HepG2 (cell line): ENCODE measurements at regions of chr19 and their contacts with region 1.

Region 1: GRCh38 chr19:6753178-6754031 is 13.8 kb downstream of the SH2D3A start:
- DNase-seq: peak; percentile 89
- ATAC-seq: peak; percentile 91
- H3K4me3 ChIP-seq: peak overlapping the region; percentile 55 to 82 (median 75)
- H3K27ac ChIP-seq: peak overlapping the region; percentile 95
- H3K4me1 ChIP-seq: peaks cover 27% of the 10 kb centered on the region
- H3K27me3 ChIP-seq: no peaks in the 10 kb centered on the region
- CTCF ChIP-seq: peak; percentile 96
- EP300 ChIP-seq: no peak
- POLR2A ChIP-seq: peak in 1 of 2 experiments; percentile 37; a peak in 3 of 4 replicates
- RAD21 ChIP-seq: peak; percentile 94

Region 2: GRCh38 chr19:6639439-6639838 is 114.0 kb before region 1 on chr19:
- CTCF ChIA-PET with region 1: no interaction called
- POLR2A ChIA-PET with region 1: no interaction called
- in situ Hi-C with region 1: no loop called
- intact Hi-C with region 1: no loop called
- DNase-seq: no peak
- ATAC-seq: no peak
- H3K4me3 ChIP-seq: no peak overlapping the region
- H3K27ac ChIP-seq: no peak overlapping the region
- H3K4me1 ChIP-seq: no peaks in the 10 kb centered on the region
- H3K27me3 ChIP-seq: peaks cover 0 to 6% of the 10 kb centered on the region in 2 experiments; a peak in 2 of 5 replicates
- CTCF ChIP-seq: no peak
- EP300 ChIP-seq: no peak
- POLR2A ChIP-seq: no peak
- RAD21 ChIP-seq: no peak

Region 3: GRCh38 chr19:6705931-6706632 is 47.3 kb before region 1 on chr19:
- CTCF ChIA-PET with region 1: no interaction called
- POLR2A ChIA-PET with region 1: interaction called, 20 read pairs
- in situ Hi-C with region 1: no loop called
- intact Hi-C with region 1: no loop called
- DNase-seq: no peak
- ATAC-seq: peak; percentile 16
- H3K4me3 ChIP-seq: no peak overlapping the region
- H3K27ac ChIP-seq: no peak overlapping the region
- H3K4me1 ChIP-seq: 0 out of 2 replicates have a peak, but pooled peaks cover 10% of the 10 kb centered on the region
- H3K27me3 ChIP-seq: no peaks in the 10 kb centered on the region
- CTCF ChIP-seq: no peak
- EP300 ChIP-seq: no peak
- POLR2A ChIP-seq: peak in 1 of 2 experiments; percentile 46; a peak in 1 of 4 replicates
- RAD21 ChIP-seq: no peak

Region 4: DNA sequence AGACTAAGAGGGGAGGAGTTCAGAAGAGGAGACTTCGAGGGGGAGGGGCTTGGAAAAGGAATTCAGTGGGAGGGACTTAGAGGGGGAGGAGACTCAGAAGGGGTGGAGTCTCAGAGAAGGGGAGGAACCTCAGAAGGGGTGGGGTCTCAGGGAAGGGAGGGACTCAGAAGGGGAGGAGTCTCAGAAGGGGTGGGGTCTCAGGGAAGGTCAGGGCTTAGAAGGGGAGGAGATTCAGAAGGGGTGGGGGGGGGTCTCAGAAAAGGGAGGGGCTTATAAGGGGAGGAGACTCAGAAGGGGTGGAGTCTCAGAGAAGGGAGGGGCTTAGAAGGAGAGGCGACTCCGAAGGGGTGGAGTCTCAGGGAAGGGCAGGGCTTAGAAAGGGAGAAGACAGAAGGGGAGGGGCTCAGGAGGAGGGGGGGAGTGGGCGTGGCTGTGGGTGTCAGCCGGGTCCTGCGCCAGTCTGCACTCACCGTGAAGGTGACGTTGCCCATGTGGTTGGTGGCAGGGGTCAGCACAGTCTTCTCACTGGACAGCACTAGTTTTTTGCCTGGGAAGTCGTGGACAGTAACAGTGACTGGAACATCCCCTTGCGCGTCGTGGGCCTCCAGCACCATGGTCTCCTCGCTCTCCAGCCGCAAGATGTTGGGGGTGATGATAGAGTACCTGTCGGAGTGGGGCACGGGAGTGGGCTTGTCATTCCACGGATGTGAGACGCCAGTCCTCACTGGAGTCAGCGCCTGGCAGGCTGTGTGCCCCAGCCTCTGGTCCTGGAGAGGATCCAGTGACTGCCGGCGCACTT is 34.5 kb before region 1 on chr19:
- CTCF ChIA-PET with region 1: no interaction called
- POLR2A ChIA-PET with region 1: interaction called, 83 read pairs
- in situ Hi-C with region 1: no loop called
- intact Hi-C with region 1: loop called (anchors 1 kb)
- DNase-seq: peak; percentile 93
- ATAC-seq: peak; percentile 69
- H3K4me3 ChIP-seq: peak overlapping the region; percentile 70 to 100 (median 89)
- H3K27ac ChIP-seq: peak overlapping the region; percentile 90
- H3K4me1 ChIP-seq: peaks cover 60% of the 10 kb centered on the region
- H3K27me3 ChIP-seq: peaks cover 0 to 7% of the 10 kb centered on the region in 2 experiments; a peak in 1 of 5 replicates
- CTCF ChIP-seq: no peak; the same call in 1 of the 2 replicates
- EP300 ChIP-seq: no peak
- POLR2A ChIP-seq: peak; percentile 85 to 88; a peak in 3 of 4 replicates
- RAD21 ChIP-seq: peak; percentile 35; the same call in 1 of the 2 replicates

Region 5: DNA sequence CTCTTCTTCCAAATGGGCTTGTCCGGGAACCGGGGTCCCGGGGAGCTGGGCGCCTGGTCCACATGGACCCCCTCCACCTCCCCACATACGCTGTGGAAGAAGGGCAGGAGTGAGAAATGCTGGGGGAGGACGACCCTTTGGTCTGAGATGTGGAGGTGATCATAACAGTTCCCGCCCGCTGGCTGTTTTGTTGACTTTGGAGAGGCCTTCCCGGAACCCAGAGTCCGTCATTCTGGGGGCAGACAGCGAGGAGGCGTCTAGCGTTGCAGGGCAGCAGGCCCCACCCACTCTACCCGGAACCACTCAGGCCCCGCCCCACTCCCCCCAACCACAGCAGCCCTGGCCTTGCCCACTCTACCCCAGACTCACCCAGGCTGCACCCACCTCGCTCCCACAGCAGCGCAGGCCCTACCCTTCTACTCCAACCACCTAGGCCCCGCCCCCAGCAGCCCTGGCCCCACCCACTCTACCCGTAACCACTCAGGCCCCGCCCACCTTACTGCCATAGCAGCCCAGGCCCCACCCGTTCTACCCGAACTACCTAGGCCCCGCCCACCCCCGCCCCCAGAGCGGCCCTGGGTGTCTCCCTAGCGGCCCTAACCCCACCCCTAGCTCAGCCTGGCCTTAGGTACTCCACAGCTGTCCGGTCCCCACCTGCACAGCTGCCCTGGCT is 23.1 kb before region 1 on chr19:
- CTCF ChIA-PET with region 1: no interaction called
- POLR2A ChIA-PET with region 1: interaction called, 28 read pairs
- in situ Hi-C with region 1: no loop called
- intact Hi-C with region 1: no loop called
- DNase-seq: peak; percentile 96
- ATAC-seq: peak; percentile 85
- H3K4me3 ChIP-seq: peak overlapping the region; percentile 48 to 70 (median 63); a peak in 5 of 6 replicates
- H3K27ac ChIP-seq: peak overlapping the region; percentile 99
- H3K4me1 ChIP-seq: peaks cover 71% of the 10 kb centered on the region
- H3K27me3 ChIP-seq: no peaks in the 10 kb centered on the region
- CTCF ChIP-seq: no peak
- EP300 ChIP-seq: peak in 1 of 2 experiments; percentile 73; a peak in 2 of 4 replicates
- POLR2A ChIP-seq: peak; percentile 34 to 76; a peak in 3 of 4 replicates
- RAD21 ChIP-seq: 0 out of 2 replicates have a peak, but pooled peaks have one; percentile 24

Region 6: DNA sequence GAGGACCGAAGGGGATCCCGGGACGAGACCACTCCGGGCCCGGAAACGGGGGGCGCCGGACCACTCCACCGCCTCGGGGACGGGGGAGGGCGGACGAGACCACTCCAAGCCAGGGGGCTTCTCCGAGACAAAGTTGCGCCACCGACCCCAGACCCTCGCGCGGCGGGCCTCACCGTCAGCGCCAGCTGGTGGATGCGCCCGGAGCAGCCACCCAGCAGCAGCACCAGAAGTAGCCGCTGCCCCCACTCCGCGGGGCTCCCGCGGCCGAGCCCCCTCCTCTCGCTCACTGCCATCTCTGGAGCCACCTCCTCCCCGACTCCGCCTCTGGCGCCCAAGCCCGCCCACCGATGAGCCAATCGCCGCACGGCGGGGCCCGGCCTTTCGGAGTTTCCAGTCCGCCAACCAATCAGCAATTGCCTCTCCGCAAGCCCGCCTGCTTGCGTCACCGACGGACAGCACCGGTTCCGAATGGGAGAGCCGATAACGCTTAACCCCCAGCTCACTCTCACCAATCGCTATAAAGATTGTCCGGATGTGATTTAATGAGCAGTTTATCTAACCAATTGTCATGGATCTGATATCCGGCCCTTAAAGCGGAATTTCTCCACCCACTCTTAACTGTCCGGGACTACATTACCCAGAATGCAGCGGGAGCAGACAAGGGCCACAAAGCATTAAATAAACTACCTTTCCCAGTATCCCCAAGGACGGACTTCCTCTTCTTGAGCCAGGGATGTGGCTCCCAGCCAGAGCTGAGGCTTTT is 15.9 kb before region 1 on chr19 and contains the start of gene GPR108:
- CTCF ChIA-PET with region 1: interaction called, 25 read pairs
- POLR2A ChIA-PET with region 1: interaction called, 89 read pairs
- in situ Hi-C with region 1: no loop called
- intact Hi-C with region 1: loop called (anchors 1 kb)
- DNase-seq: peak; percentile 100
- ATAC-seq: peak; percentile 72
- H3K4me3 ChIP-seq: peak within 1 kb of the TSS; percentile 82 to 100 (median 90)
- H3K27ac ChIP-seq: peak within 1 kb of the TSS; percentile 89
- H3K4me1 ChIP-seq: peaks cover 56% of the 10 kb centered on the region
- H3K27me3 ChIP-seq: no peaks in the 10 kb centered on the region; a peak in 1 of 5 replicates
- CTCF ChIP-seq: 0 out of 2 replicates have a peak, but pooled peaks have one; percentile 13
- EP300 ChIP-seq: no peak
- POLR2A ChIP-seq: peak; percentile 56 to 67; a peak in 3 of 4 replicates
- RAD21 ChIP-seq: peak; percentile 49; the same call in 1 of the 2 replicates
- total RNA-seq, gene GPR108: 24.1 and 36.4 TPM in 2 replicates